Caco-2 (cell line): ENCODE measurements at regions of chr11 and their contacts with region 1.

Region 1: DNA sequence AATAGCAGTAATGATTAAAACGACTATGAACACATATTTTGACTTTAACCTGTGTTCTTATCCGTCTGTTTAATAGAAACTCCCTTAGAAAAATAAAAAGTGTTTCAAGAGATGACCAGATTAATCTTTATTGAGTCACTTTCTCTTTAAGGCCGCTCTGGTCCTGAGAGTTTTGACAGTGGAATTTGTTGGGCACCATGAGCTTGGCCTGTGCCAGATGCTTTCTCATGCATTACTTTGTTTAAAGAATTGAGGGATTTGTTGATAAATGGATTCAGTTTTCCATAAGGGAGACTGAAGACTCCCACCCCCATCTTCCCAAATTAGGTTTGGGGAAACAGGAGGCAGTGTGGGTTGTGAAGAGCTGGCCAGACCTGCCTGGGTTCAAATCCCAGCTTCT is 53.2 kb upstream of the ALX4 start:
- DNase-seq: no peak
- H3K4me3 ChIP-seq: no peak overlapping the region
- H3K4me3 Mint-ChIP-seq: no peak overlapping the region
- H3K27ac Mint-ChIP-seq: no peak overlapping the region
- H3K4me1 ChIP-seq: no peaks in the 10 kb centered on the region
- H3K4me1 Mint-ChIP-seq: no peaks in the 10 kb centered on the region
- H3K27me3 ChIP-seq: no peaks in the 10 kb centered on the region
- H3K27me3 Mint-ChIP-seq: peaks cover 19% of the 10 kb centered on the region
- CTCF ChIP-seq: no peak

Region 2: DNA sequence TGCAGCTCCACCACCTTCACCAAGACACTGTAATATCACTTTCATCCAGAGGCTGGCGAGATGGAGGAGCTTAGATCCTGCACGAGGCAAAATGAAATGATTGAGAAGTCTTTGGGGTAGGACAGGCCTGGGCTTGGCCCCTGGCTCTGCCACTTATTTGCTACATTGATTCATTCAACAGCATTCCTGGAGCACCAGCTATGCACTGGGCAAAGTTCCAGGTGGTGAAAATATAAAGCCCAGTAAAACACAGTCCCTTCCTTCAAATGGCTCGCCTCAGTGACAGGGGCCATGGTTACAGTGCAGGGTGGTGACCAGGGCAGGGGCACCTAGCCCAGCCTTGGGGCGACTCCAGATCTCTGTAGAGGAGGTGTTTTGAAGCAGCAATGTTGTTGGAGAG is 72.9 kb before region 1 on chr11:
- CTCF ChIA-PET with region 1: no interaction called
- POLR2A ChIA-PET with region 1: no interaction called
- intact Hi-C with region 1: no loop called
- DNase-seq: no peak
- H3K4me3 ChIP-seq: no peak overlapping the region
- H3K4me3 Mint-ChIP-seq: no peak overlapping the region
- H3K27ac Mint-ChIP-seq: no peak overlapping the region
- H3K4me1 ChIP-seq: peaks cover 7% of the 10 kb centered on the region; the same call in 1 of the 2 replicates
- H3K4me1 Mint-ChIP-seq: peaks cover 12% of the 10 kb centered on the region
- H3K27me3 ChIP-seq: no peaks in the 10 kb centered on the region
- H3K27me3 Mint-ChIP-seq: no peaks in the 10 kb centered on the region
- CTCF ChIP-seq: no peak

Region 3: DNA sequence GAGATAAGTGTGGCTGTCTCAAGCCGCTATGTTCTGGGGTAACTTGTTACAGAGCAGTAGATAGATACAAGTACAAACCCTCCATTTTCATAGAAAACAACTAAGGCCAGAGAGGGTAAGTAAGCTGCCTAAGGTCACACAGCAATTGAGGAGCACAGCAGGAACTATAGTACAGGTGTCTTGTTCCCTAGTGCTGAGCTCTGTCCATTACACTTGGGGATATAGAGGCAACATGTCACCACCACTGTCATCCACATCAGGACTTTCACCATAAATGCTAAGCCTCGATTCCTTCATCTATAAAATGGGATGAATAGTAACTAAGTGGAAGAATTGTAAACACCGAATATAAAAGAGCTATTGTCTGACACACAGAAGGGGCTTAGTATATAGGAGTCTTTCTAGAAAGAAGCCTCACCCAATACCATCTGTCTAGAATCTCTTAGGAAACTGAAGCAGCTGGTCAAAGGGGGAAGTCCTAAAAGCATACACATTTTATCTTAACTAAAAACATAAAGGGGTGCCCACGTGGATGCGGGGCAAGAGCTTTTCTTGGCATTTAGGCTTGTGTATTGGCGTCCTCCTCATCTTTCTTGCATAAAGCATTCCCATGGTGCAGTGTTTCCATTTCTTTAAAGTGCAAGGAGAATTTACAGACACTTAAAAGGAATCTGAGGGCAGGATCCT is 40.6 kb after region 1 on chr11:
- CTCF ChIA-PET with region 1: no interaction called
- POLR2A ChIA-PET with region 1: interaction called, 11 read pairs
- intact Hi-C with region 1: no loop called
- DNase-seq: no peak
- H3K4me3 ChIP-seq: no peak overlapping the region
- H3K4me3 Mint-ChIP-seq: no peak overlapping the region
- H3K27ac Mint-ChIP-seq: no peak overlapping the region
- H3K4me1 ChIP-seq: no peaks in the 10 kb centered on the region
- H3K4me1 Mint-ChIP-seq: no peaks in the 10 kb centered on the region
- H3K27me3 ChIP-seq: no peaks in the 10 kb centered on the region
- H3K27me3 Mint-ChIP-seq: peaks cover 5% of the 10 kb centered on the region
- CTCF ChIP-seq: no peak